ENCODE measurements at regions of chr10 and their contacts with region 1.

Region 1: GRCh38 chr10:77641788-77642397 is 4.3 kb upstream of the KCNMA1 start:
- DNase-seq: peak; percentile 63
- ATAC-seq: peak; percentile 52; the same call in 1 of the 3 replicates
- H3K4me3 ChIP-seq: no peak overlapping the region
- H3K27ac ChIP-seq: no peak overlapping the region
- H3K4me1 ChIP-seq: no peaks in the 10 kb centered on the region
- H3K27me3 ChIP-seq: peaks cover 2 to 9% of the 10 kb centered on the region in 2 experiments; a peak in 3 of 5 replicates
- CTCF ChIP-seq: peak; percentile 76
- EP300 ChIP-seq: no peak
- POLR2A ChIP-seq: no peak
- RAD21 ChIP-seq: peak; percentile 61

Region 2: GRCh38 chr10:77165445-77166208 is 476.3 kb before region 1 on chr10:
- CTCF ChIA-PET with region 1: interaction called, 28 read pairs
- POLR2A ChIA-PET with region 1: no interaction called
- in situ Hi-C with region 1: no loop called
- intact Hi-C with region 1: loop called (anchors 2 kb)
- DNase-seq: peak; percentile 40
- ATAC-seq: peak; percentile 80
- H3K4me3 ChIP-seq: no peak overlapping the region
- H3K27ac ChIP-seq: no peak overlapping the region
- H3K4me1 ChIP-seq: no peaks in the 10 kb centered on the region
- H3K27me3 ChIP-seq: 0 out of 5 replicates have a peak, but pooled peaks cover 0 to 1% of the 10 kb centered on the region in 2 experiments
- CTCF ChIP-seq: peak; percentile 83
- EP300 ChIP-seq: no peak
- POLR2A ChIP-seq: no peak
- RAD21 ChIP-seq: peak; percentile 35; the same call in 1 of the 2 replicates

Region 3: DNA sequence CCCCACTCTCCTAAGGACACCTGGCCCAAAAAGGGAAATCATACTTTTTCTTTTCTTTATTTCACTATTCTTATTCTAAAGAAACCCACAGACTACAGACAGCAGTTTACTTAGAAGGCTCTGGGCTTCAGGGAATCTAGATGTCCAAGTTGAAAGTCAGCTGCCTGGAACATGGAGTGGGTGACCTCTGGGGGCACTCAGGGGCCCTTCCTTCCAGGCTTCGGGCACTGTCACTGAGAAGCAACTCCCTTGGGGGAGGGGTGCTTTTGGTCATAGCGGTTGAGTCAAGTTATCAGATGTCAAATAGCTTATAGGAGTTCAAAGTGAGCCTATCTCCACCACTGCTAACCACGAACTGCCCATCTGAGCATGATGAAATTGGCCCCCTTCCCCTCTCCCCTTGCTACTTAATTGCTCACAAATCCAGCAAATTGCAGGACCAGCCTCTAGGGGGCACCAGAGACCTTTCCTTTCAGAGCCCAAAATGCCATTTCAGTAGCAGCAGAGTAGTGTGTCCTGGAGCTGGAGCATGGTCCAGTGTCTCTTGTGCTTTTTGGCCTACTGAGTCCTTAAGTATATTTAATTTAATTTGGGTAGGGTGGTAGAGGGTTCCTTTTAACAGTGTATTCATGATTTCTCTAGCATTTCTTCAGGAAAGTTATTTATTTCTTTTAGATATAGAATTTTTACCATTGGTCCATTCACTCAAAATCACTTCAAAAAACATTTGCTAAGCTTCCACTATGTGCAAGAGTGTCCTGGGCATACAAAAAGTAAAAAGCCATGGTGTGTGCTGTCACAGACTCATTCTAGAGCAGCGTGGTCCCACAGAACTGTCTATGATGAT is 468.1 kb before region 1 on chr10:
- CTCF ChIA-PET with region 1: interaction called, 77 read pairs
- POLR2A ChIA-PET with region 1: no interaction called
- in situ Hi-C with region 1: loop called (anchors 5 kb)
- intact Hi-C with region 1: loop called (anchors 1 kb)
- DNase-seq: peak; percentile 61
- ATAC-seq: peak; percentile 90
- H3K4me3 ChIP-seq: no peak overlapping the region
- H3K27ac ChIP-seq: no peak overlapping the region
- H3K4me1 ChIP-seq: no peaks in the 10 kb centered on the region
- H3K27me3 ChIP-seq: no peaks in the 10 kb centered on the region
- CTCF ChIP-seq: peak; percentile 88
- EP300 ChIP-seq: no peak
- POLR2A ChIP-seq: no peak
- RAD21 ChIP-seq: peak; percentile 68

Region 4: GRCh38 chr10:77179015-77179695 is 462.7 kb before region 1 on chr10:
- CTCF ChIA-PET with region 1: interaction called, 77 read pairs
- POLR2A ChIA-PET with region 1: no interaction called
- in situ Hi-C with region 1: loop called (anchors 5 kb)
- intact Hi-C with region 1: loop called (anchors 1 kb)
- DNase-seq: no peak
- ATAC-seq: no peak
- H3K4me3 ChIP-seq: no peak overlapping the region
- H3K27ac ChIP-seq: no peak overlapping the region
- H3K4me1 ChIP-seq: no peaks in the 10 kb centered on the region
- H3K27me3 ChIP-seq: peaks cover 0 to 9% of the 10 kb centered on the region in 2 experiments; a peak in 2 of 5 replicates
- CTCF ChIP-seq: no peak
- EP300 ChIP-seq: no peak
- POLR2A ChIP-seq: no peak
- RAD21 ChIP-seq: no peak

Region 5: DNA sequence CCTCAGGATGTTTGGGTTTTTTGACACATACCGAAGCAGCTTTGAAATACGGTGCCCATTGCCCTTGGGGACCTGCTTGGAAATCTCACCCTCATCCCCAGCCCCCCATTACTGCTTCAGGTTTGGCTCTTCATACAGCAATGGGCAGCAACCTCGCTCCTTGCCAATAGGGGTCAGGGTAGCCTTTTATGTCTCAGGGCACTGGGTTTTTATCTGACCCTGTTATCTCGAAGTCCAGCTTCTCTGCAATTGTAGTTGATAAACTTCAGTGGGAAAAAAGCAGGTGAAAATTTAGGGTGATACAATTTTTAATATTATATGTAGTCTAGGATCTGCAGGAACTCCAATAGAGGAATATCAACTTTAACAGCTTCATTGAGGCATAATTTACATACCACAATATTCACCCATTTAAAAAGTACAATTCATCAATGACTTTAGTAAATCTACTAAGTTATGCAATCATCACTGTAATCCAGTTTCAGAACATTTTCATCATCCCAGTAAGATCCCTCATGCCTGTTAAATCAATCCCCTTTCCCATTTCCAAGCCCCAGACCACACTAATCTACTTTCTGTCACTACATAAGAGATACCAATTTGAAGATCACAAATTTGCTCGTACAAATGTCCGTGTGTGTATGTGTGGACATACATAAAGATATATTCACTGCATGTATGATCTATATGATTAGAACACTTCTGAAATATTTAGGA is 390.4 kb before region 1 on chr10:
- CTCF ChIA-PET with region 1: interaction called, 10 read pairs
- POLR2A ChIA-PET with region 1: no interaction called
- in situ Hi-C with region 1: loop called (anchors 5 kb)
- intact Hi-C with region 1: no loop called
- DNase-seq: peak; percentile 8
- ATAC-seq: peak; percentile 75
- H3K4me3 ChIP-seq: no peak overlapping the region
- H3K27ac ChIP-seq: no peak overlapping the region
- H3K4me1 ChIP-seq: peaks cover 9% of the 10 kb centered on the region
- H3K27me3 ChIP-seq: no peaks in the 10 kb centered on the region; a peak in 1 of 5 replicates
- CTCF ChIP-seq: peak; percentile 62
- EP300 ChIP-seq: no peak
- POLR2A ChIP-seq: no peak
- RAD21 ChIP-seq: no peak

Region 6: DNA sequence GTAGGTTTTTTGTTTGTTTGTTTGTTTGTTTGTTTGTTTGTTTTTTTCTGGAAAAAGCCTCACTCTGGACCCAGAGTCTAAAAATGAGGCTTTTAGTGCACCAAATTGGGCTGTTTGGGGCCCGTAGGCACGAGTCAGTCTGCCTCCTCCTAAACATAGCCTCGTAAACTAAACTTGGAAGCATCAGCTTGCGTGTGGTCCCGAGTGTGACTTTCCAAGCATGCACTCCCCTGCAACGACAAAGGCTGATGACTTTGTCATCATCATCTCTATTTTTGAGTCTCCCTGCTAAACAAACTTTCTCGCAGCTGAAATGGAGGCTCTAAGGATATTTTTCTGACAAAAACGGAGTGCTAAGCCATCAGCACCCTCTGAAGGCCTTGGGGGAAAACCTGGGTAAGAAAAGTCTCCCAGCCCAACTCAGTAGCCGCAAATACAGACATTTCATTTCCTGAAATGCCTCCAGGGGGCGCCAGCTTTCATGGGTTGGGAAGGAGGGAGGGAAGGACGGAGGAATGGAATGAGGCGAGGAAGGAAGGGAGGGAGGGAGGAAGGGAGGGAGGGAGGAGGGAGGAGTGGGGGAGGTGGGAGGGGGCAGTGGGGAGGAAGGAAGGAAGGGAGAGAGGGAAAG is 250.2 kb before region 1 on chr10:
- CTCF ChIA-PET with region 1: interaction called, 8 read pairs
- POLR2A ChIA-PET with region 1: no interaction called
- in situ Hi-C with region 1: loop called (anchors 5 kb)
- intact Hi-C with region 1: loop called (anchors 5 kb)
- DNase-seq: peak; percentile 43
- ATAC-seq: peak; percentile 71
- H3K4me3 ChIP-seq: no peak overlapping the region
- H3K27ac ChIP-seq: no peak overlapping the region
- H3K4me1 ChIP-seq: no peaks in the 10 kb centered on the region
- H3K27me3 ChIP-seq: peaks cover 0 to 7% of the 10 kb centered on the region in 2 experiments; a peak in 2 of 5 replicates
- CTCF ChIP-seq: peak; percentile 64
- EP300 ChIP-seq: no peak
- POLR2A ChIP-seq: no peak
- RAD21 ChIP-seq: no peak

Region 7: DNA sequence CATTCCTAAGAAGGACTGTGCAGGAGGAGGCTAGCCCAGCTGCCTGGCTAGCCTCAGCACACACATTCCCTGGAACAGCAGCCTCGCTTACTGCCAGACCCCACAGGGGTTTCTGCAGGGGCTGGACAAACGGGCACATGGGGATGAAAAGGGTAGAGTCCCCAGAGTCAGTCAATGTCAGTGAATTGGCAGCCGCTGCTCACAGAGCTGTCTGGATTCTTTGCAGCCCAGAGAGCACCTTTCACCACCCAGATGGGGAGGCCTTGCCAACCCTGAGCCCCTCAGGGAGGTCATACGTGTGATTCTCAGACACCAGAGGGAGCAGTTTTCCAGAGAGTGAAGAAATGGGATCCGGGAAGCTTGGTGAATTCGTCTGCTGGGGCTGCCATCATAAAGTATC is 147.6 kb before region 1 on chr10:
- CTCF ChIA-PET with region 1: interaction called, 7 read pairs
- POLR2A ChIA-PET with region 1: no interaction called
- in situ Hi-C with region 1: loop called (anchors 10 kb)
- intact Hi-C with region 1: no loop called
- DNase-seq: peak; percentile 10
- ATAC-seq: peak; percentile 60
- H3K4me3 ChIP-seq: no peak overlapping the region
- H3K27ac ChIP-seq: no peak overlapping the region
- H3K4me1 ChIP-seq: no peaks in the 10 kb centered on the region
- H3K27me3 ChIP-seq: no peaks in the 10 kb centered on the region
- CTCF ChIP-seq: peak; percentile 23; the same call in 1 of the 2 replicates
- EP300 ChIP-seq: no peak
- POLR2A ChIP-seq: no peak
- RAD21 ChIP-seq: no peak

Measured in HepG2 (cell line).